Activated T-helper 1 cell treated with anti-CD3 and anti-CD28 coated beads, Interleukin-12 subunit alpha, Interleukin-12 subunit beta, Interleukin-2, Interleukin-4 antibody, amounts not matched to agents 30 ng/mL and 10 ng/mL and 1 ng/mL, durations not matched to agents 14 hours and 24 hours and 36 hours (primary cell): ENCODE measurements at regions of chr3 and their contacts with region 1.

Region 1: DNA sequence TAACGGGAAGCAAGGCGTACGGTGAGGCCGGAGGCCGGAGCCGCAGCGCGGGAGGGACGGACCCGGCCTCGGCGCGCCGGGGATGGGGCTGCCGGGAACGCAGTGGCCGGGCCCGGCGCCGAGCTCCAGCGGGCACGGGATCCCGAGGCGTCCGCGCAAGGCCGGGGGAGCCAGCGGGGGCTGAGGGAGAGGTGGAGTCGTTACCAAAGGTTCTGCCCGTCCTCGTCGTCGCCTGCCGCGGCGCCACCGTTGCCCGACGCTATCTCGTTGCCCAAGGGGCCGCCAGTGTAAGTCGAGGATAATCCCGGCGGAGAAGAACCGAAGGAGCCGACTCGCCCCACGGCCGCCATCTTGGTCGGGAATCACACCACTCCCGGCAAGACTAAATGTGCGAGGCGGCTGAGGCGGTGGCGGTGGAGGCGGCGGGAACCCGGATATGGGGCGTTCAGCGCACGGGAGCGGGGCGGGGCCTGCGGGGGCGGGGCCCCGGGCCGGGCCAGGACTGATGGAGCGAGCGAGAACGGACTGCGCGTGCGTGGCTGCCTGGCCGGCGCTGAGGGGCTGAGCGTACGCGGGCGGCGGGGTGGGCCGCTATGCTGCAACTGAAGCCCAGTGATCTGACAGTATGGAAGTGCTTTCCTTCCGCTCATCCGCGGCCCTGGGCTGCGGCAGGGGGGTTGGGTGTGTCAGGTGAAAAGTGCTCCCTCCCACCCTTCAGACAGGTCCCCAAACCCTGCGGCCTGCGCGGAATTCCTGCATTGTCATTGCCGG is at the start of gene DYNC1LI1:
- DNase-seq: peak; percentile 90
- H3K4me3 Mint-ChIP-seq: peak within 1 kb of the TSS; percentile 91
- H3K27ac Mint-ChIP-seq: peak within 1 kb of the TSS; percentile 88
- H3K4me1 Mint-ChIP-seq: peaks cover 22% of the 10 kb centered on the region
- H3K27me3 Mint-ChIP-seq: no peaks in the 10 kb centered on the region
- total RNA-seq, gene DYNC1LI1: 35.9 and 43.3 TPM in 2 replicates

Region 2: DNA sequence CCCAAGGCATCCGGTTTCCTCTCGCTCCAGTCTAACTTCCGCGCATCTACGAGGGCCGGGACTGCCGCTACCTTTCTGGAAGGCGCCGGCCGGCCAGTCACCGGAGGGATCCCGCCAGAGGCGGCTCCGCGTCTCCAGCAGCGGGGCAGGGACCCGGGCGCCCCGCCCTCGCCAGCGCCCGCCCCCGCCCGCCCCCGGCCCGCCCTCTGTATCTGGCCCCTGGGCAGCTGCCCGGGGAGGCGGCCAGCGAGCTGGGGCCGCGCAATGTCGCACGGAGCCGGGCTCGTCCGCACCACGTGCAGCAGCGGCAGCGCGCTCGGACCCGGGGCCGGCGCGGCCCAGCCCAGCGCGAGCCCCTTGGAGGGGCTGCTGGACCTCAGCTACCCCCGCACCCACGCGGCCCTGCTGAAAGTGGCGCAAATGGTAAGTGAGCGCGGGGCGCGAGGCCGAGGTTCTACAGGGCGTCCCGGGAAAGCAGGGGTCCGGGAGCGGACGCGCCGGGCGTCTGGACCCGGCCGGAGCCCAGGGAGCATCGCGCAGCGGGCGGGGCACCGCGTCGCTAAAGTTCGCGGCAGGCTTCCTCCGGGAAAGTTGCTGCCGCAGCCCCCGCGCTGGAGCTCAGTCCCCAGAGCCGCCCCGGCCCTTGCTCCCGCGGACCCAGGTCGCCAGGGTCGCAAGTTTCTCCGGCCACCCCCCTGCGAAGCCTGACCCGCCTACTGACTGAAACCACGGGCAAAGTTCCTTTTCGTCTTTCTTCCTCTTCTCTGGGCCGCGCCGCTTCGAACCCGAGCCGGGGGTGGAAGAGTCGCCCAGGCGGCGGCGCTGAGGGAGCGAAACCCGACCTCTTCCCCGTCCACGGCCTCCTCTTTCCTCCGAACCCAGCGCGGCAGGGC is 178.7 kb before region 1 on chr3 and contains the start of gene CMTM7:
- intact Hi-C with region 1: loop called (anchors 2 kb)
- DNase-seq: peak; percentile 66
- H3K4me3 Mint-ChIP-seq: peak within 1 kb of the TSS; percentile 98
- H3K27ac Mint-ChIP-seq: peak within 1 kb of the TSS; percentile 98
- H3K4me1 Mint-ChIP-seq: peaks cover 61% of the 10 kb centered on the region
- H3K27me3 Mint-ChIP-seq: no peaks in the 10 kb centered on the region
- total RNA-seq, gene CMTM7: 50.6 and 59.7 TPM in 2 replicates

Region 3: GRCh38 chr3:32816439-32817256 is 246.0 kb after region 1 on chr3:
- intact Hi-C with region 1: no loop called
- DNase-seq: no peak
- H3K4me3 Mint-ChIP-seq: peak overlapping the region; percentile 72
- H3K27ac Mint-ChIP-seq: peak overlapping the region; percentile 61
- H3K4me1 Mint-ChIP-seq: peaks cover 13% of the 10 kb centered on the region
- H3K27me3 Mint-ChIP-seq: peaks cover 58% of the 10 kb centered on the region

Region 4: GRCh38 chr3:33113772-33114621 is 543.4 kb after region 1 on chr3 and contains the start of gene CRTAP:
- intact Hi-C with region 1: loop called (anchors 1 kb)
- DNase-seq: peak; percentile 78
- H3K4me3 Mint-ChIP-seq: peak within 1 kb of the TSS; percentile 87
- H3K27ac Mint-ChIP-seq: peak within 1 kb of the TSS; percentile 74
- H3K4me1 Mint-ChIP-seq: peaks cover 26% of the 10 kb centered on the region
- H3K27me3 Mint-ChIP-seq: no peaks in the 10 kb centered on the region
- total RNA-seq, gene CRTAP: 30.3 and 33.2 TPM in 2 replicates